GM12878 (cell line): ENCODE measurements at regions of chr3 and their contacts with region 1.

Region 1: DNA sequence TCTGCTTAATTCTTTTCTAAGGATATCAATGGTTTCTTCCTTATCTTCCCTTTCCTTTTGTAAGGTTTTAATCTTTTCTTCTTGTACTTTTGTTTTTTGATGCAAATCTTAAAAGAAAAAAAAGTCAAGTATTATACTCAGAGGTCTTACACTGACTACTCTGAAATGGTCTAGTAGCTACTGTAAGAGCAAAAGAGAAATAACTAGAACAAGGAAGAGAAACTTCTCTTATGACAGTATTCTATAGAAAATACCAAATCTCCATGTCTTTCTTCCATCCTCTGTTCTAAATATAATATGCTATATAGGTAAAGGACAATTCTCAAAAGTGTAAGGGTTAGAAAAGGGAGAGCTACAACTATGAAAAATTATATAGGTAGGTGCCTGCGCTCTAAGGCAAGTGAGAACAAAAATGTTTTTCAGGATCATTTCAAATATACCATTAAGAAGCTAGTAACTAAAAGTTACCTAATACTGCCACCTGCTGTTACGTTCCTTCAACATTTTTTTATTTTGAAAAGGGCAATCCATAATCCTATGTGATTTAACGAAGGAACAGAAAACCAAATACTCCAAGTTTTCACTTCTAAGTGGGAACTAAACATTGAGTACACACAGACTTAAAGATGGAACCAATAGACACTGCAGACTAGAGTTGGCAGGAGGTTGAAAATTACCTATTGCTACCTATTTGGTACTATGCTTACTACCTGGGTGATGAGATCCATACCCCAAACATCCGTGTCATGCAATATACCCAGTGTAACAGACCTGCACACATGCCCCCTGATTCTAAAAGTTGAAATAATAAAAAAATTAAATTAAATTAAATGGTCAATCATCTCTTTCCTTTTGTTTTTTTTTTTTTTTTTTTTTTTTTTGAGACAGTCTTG is 36.7 kb downstream of the CIP2A start:
- DNase-seq: no peak
- ATAC-seq: peak; percentile 71
- H3K4me3 ChIP-seq: no peak overlapping the region
- H3K27ac ChIP-seq: no peak overlapping the region
- H3K4me1 ChIP-seq: no peaks in the 10 kb centered on the region
- H3K27me3 ChIP-seq: no peaks in the 10 kb centered on the region
- CTCF ChIP-seq: peak; percentile 28 to 57 (median 30); a peak in 4 of 6 replicates
- EP300 ChIP-seq: no peak
- POLR2A ChIP-seq: no peak
- RAD21 ChIP-seq: peak; percentile 63

Region 2: DNA sequence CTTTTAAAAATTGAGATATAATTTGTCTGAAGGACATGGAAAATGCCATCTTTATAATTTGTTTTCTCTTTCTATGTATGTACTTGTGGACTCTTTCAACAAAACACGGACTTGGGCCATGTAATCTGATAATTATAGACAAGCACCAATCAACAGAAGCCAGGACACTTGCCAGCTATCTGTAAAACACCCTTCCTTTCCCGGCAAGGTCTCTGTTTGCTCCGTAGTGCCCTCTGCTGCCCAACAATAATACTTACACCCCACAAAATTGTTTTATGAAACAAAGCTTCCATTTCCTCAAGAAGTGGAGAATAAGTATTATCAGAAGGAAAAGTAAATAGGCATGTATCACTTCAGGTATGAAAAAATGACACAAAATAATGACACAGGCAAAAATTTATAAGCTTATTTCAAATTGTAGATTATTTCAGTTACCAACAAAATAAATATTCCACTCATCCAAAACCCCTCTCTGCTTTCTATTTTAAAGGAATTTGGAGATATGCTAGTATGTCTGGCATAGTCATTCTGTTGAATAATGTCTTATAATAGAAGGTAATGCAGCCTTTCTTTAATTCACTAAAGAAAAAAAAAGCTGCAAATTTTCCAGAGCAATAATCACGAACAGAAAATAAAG is 74.9 kb before region 1 on chr3:
- CTCF ChIA-PET with region 1: interaction called, 34 read pairs
- POLR2A ChIA-PET with region 1: no interaction called
- RAD21 ChIA-PET with region 1: interaction called, 11 read pairs
- SMC1A ChIA-PET with region 1: interaction called, 11 read pairs
- in situ Hi-C with region 1: no loop called
- intact Hi-C with region 1: no loop called
- DNase-seq: peak; percentile 12
- ATAC-seq: peak; percentile 89
- H3K4me3 ChIP-seq: no peak overlapping the region
- H3K27ac ChIP-seq: no peak overlapping the region
- H3K4me1 ChIP-seq: no peaks in the 10 kb centered on the region
- H3K27me3 ChIP-seq: no peaks in the 10 kb centered on the region
- CTCF ChIP-seq: peak; percentile 66 to 70 (median 69)
- EP300 ChIP-seq: no peak
- POLR2A ChIP-seq: no peak
- RAD21 ChIP-seq: peak; percentile 86

Region 3: GRCh38 chr3:108497271-108497670 is 55.2 kb before region 1 on chr3:
- CTCF ChIA-PET with region 1: interaction called, 113 read pairs
- POLR2A ChIA-PET with region 1: interaction called, 4 read pairs
- RAD21 ChIA-PET with region 1: interaction called, 50 read pairs
- SMC1A ChIA-PET with region 1: interaction called, 98 read pairs
- in situ Hi-C with region 1: loop called (anchors 10 kb)
- intact Hi-C with region 1: no loop called
- DNase-seq: no peak
- ATAC-seq: no peak
- H3K4me3 ChIP-seq: no peak overlapping the region
- H3K27ac ChIP-seq: no peak overlapping the region
- H3K4me1 ChIP-seq: no peaks in the 10 kb centered on the region
- H3K27me3 ChIP-seq: no peaks in the 10 kb centered on the region
- CTCF ChIP-seq: no peak
- EP300 ChIP-seq: no peak
- POLR2A ChIP-seq: no peak
- RAD21 ChIP-seq: no peak

Region 4: GRCh38 chr3:108513961-108514360 is 38.6 kb before region 1 on chr3:
- CTCF ChIA-PET with region 1: interaction called, 14 read pairs
- POLR2A ChIA-PET with region 1: no interaction called
- RAD21 ChIA-PET with region 1: no interaction called
- SMC1A ChIA-PET with region 1: interaction called, 6 read pairs
- in situ Hi-C with region 1: no loop called
- intact Hi-C with region 1: no loop called
- DNase-seq: no peak
- ATAC-seq: no peak
- H3K4me3 ChIP-seq: no peak overlapping the region
- H3K27ac ChIP-seq: no peak overlapping the region
- H3K4me1 ChIP-seq: no peaks in the 10 kb centered on the region
- H3K27me3 ChIP-seq: no peaks in the 10 kb centered on the region
- CTCF ChIP-seq: no peak
- EP300 ChIP-seq: no peak
- POLR2A ChIP-seq: no peak
- RAD21 ChIP-seq: no peak

Region 5: DNA sequence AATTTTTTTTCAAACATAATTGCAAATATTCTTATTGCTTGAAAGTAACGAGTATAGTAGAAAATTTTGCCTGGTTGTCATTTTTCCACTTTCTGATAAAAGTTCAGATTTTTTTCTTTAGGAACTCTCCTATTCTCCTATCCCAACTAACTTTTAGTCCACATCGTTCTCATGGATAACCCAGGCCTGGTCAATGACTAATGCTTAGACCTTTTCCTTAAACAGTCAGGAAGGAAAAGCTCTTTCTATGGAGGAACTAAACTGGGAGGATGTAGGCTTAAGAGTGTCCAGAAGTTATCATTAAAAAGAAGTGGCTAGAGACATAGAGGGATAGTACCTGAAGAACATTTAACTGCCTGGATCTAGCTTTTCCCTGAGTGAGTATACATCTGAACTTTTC is 10.1 kb after region 1 on chr3:
- CTCF ChIA-PET with region 1: interaction called, 11 read pairs
- POLR2A ChIA-PET with region 1: no interaction called
- RAD21 ChIA-PET with region 1: interaction called, 6 read pairs
- SMC1A ChIA-PET with region 1: interaction called, 8 read pairs
- in situ Hi-C with region 1: no loop called
- intact Hi-C with region 1: no loop called
- DNase-seq: no peak
- ATAC-seq: no peak
- H3K4me3 ChIP-seq: no peak overlapping the region
- H3K27ac ChIP-seq: no peak overlapping the region
- H3K4me1 ChIP-seq: no peaks in the 10 kb centered on the region
- H3K27me3 ChIP-seq: no peaks in the 10 kb centered on the region
- CTCF ChIP-seq: no peak
- EP300 ChIP-seq: no peak
- POLR2A ChIP-seq: no peak
- RAD21 ChIP-seq: no peak

Region 6: DNA sequence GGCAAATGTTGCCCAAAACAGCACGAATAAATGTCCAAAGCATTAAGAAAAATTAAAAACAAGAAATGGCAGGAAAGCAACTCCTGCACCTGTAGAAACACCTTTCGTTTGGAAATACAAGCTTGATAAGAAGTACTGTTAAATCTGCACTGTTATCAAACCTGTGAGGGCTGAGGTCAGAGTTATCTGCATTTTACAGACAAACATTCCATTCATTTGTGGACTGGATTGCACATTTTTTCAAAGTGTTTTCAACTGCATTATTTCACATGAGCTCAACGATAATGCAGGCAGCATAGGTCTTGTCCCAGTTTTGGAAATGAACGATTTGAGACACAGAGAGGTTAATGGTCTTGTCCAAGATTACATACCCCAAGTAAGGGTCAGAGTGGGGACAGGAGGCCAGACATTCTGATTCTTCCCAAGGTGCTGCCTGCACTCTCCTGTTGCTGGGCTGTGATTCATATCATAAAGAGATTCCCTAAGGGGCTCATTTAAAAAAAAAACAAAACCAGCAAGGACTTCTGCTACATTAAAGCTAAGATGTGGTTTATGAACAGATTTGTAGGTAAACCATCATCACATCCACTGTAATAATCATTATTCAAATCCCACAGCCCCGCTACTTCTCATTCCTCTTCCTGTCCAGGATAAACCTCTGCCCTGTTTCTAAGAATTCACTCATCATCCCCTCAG is 388.2 kb after region 1 on chr3:
- CTCF ChIA-PET with region 1: no interaction called
- POLR2A ChIA-PET with region 1: no interaction called
- RAD21 ChIA-PET with region 1: no interaction called
- SMC1A ChIA-PET with region 1: no interaction called
- in situ Hi-C with region 1: no loop called
- intact Hi-C with region 1: no loop called
- DNase-seq: no peak
- ATAC-seq: no peak
- H3K4me3 ChIP-seq: no peak overlapping the region
- H3K27ac ChIP-seq: no peak overlapping the region
- H3K4me1 ChIP-seq: no peaks in the 10 kb centered on the region
- H3K27me3 ChIP-seq: no peaks in the 10 kb centered on the region; a peak in 1 of 4 replicates
- CTCF ChIP-seq: no peak
- EP300 ChIP-seq: no peak
- POLR2A ChIP-seq: no peak
- RAD21 ChIP-seq: no peak